ENCODE measurements at regions of chr6 and their contacts with region 1.

Region 1: DNA sequence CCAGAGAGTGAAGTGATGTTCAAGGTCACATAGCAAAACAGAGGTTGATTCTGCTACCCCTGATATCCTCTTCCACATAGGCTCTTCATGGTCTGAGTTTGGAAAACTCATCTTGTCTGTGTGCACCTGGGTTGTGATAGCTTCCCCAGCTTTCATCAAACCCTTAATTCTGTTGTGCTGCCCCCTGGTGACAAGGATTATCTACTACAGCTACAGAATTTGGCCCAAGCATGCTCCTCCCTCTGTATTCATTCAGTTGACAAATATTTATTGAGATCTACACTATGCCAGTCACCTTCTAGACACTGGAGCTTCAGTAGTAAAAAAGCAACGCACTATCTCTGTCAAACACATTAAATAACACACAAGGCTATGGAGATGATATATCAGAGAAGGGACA is 50.4 kb downstream of the SMPDL3A start:
- DNase-seq: peak in 1 of 2 experiments; percentile 87
- H3K4me3 ChIP-seq: no peak overlapping the region
- H3K27ac ChIP-seq: no peak overlapping the region
- H3K4me1 ChIP-seq: peaks cover 0 to 2% (median 0%) of the 10 kb centered on the region in 4 experiments; a peak in 1 of 7 replicates
- H3K27me3 ChIP-seq: no peaks in the 10 kb centered on the region
- CTCF ChIP-seq: peak in 2 of 3 experiments; percentile 71 to 72; a peak in 3 of 4 replicates
- EP300 ChIP-seq: no peak
- POLR2A ChIP-seq: no peak
- RAD21 ChIP-seq: peak; percentile 69 to 78

Region 2: GRCh38 chr6:122491919-122492555 is 347.4 kb before region 1 on chr6:
- CTCF ChIA-PET with region 1: interaction called, 13 read pairs
- POLR2A ChIA-PET with region 1: no interaction called
- DNase-seq: peak in 1 of 2 experiments; percentile 74
- H3K4me3 ChIP-seq: no peak overlapping the region
- H3K27ac ChIP-seq: no peak overlapping the region
- H3K4me1 ChIP-seq: no peaks in the 10 kb centered on the region
- H3K27me3 ChIP-seq: no peaks in the 10 kb centered on the region
- CTCF ChIP-seq: peak; percentile 64 to 82 (median 75)
- EP300 ChIP-seq: no peak
- POLR2A ChIP-seq: no peak
- RAD21 ChIP-seq: peak; percentile 85 to 87

Region 3: DNA sequence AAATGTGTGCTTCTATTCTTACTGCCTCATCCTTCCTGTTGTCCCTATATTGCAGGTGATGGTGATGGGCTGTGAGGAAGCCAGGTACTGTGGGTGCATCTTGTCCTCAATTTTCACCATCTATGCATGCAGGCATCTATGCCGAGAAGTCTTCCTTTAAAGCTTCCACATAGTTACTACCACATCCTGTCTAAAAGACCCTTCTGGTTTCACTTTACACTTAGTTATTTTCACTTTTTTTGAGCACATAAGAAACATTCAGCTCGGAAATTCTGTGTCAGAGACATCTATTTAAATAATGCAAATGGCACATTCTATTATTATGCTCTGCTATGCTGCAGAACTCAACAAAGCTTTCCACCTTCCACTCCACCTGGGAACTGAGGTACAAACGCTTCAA is 88.2 kb before region 1 on chr6:
- CTCF ChIA-PET with region 1: interaction called, 82 read pairs
- POLR2A ChIA-PET with region 1: no interaction called
- DNase-seq: no peak
- H3K4me3 ChIP-seq: no peak overlapping the region
- H3K27ac ChIP-seq: no peak overlapping the region
- H3K4me1 ChIP-seq: peaks cover 0 to 4% (median 1%) of the 10 kb centered on the region in 4 experiments; a peak in 1 of 7 replicates
- H3K27me3 ChIP-seq: 0 out of 7 replicates have a peak, but pooled peaks cover 0 to 1% (median 0%) of the 10 kb centered on the region in 4 experiments
- CTCF ChIP-seq: no peak
- EP300 ChIP-seq: no peak
- POLR2A ChIP-seq: no peak
- RAD21 ChIP-seq: no peak

Region 4: DNA sequence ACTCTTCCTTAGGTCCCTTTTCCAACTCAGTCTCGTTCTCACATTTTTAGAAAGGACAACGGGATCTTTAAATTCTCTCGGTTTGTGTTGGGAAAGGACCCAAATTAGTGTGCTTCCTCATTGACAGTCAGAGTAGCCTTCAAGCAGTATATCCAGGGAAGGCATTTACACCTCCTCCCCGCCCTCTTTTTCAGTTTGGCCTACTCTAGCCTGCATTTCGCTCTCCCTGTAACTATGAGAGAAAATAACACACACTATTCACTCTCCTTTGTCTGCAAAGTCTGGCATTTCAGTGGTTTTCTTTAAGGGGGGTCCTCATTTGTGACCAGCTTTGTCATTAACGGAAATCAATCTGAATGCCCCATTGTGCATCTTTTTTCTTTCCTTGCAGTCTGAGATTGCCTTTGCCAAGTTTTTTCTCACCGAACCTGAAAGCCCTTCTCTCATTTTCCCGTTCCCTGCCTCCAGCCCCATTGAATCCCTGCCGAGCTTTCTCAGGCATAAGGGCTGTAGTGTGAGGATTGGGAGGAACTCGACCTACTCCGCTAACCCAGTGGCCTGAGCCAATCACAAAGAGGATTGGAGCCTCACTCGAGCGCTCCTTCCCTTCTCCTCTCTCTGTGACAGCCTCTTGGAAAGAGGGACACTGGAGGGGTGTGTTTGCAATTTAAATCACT is 60.4 kb before region 1 on chr6:
- CTCF ChIA-PET with region 1: interaction called, 12 read pairs
- POLR2A ChIA-PET with region 1: no interaction called
- DNase-seq: peak in 1 of 2 experiments; percentile 63
- H3K4me3 ChIP-seq: peak overlapping the region in 1 of 4 experiments; percentile 47; a peak in 3 of 8 replicates
- H3K27ac ChIP-seq: no peak overlapping the region
- H3K4me1 ChIP-seq: peaks cover 2 to 9% (median 8%) of the 10 kb centered on the region in 4 experiments; a peak in 6 of 7 replicates
- H3K27me3 ChIP-seq: no peaks in the 10 kb centered on the region
- CTCF ChIP-seq: no peak
- EP300 ChIP-seq: no peak
- POLR2A ChIP-seq: no peak
- RAD21 ChIP-seq: no peak

Region 5: DNA sequence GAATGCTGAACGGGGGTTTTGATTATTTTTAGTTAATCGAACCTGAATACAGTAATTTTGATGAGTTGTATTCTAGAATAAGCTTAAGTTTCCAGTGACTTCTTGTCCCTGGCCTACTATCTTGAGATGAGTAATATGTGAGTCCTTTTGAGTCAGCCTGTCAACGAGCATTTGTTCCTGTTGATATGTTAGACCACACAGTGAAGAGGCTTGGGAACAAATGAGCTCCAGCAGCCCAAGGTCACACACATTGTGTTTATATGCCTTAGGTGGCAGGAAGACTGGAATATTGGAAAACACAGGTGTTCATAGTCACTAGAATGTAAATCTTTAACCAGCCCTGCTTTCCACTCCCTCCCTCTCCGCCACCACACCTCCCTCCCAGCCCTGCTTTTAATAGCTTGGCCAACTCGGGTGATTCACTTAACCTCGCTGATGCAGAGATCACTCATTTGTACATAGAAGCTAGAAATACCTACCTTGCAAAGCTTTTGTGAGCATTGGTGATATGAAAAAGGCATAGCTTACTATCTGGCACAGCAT is 41.3 kb before region 1 on chr6:
- CTCF ChIA-PET with region 1: interaction called, 62 read pairs
- POLR2A ChIA-PET with region 1: interaction called, 4 read pairs
- DNase-seq: no peak
- H3K4me3 ChIP-seq: no peak overlapping the region
- H3K27ac ChIP-seq: no peak overlapping the region
- H3K4me1 ChIP-seq: no peaks in the 10 kb centered on the region
- H3K27me3 ChIP-seq: no peaks in the 10 kb centered on the region
- CTCF ChIP-seq: no peak
- EP300 ChIP-seq: no peak
- POLR2A ChIP-seq: no peak
- RAD21 ChIP-seq: no peak

Region 6: GRCh38 chr6:122825158-122825557 is 14.3 kb before region 1 on chr6:
- CTCF ChIA-PET with region 1: interaction called, 29 read pairs
- POLR2A ChIA-PET with region 1: no interaction called
- DNase-seq: no peak
- H3K4me3 ChIP-seq: no peak overlapping the region
- H3K27ac ChIP-seq: no peak overlapping the region
- H3K4me1 ChIP-seq: peaks cover 0 to 11% (median 8%) of the 10 kb centered on the region in 4 experiments; a peak in 4 of 7 replicates
- H3K27me3 ChIP-seq: no peaks in the 10 kb centered on the region
- CTCF ChIP-seq: no peak
- EP300 ChIP-seq: no peak
- POLR2A ChIP-seq: no peak
- RAD21 ChIP-seq: no peak

Region 7: DNA sequence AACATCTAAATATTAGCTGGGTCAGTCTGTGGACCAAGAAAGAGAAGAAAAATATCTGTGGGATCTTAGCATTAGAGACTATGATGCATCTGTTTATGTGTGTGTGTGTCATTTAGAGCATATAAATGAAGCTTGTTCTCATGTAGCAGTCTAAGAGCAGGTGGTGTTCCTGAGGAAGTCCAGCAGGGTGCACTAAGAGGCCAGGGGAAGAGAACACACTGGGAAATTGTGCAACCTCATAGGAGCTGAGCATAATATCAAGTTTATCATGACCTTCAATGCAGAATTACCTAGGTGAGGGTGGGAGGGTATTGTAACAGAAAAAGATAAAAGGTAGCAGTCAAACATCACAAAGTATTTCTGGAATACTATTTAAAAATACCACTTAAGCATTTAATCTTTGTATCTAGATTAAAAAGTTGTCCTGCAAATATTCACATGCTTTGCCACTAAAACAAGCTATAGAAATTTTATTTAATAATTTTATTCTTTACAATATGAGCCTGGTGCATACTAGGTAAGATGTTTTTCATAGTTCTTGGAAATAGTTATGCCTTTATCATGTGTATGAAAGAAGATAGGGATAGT is 30.1 kb after region 1 on chr6:
- CTCF ChIA-PET with region 1: interaction called, 14 read pairs
- POLR2A ChIA-PET with region 1: no interaction called
- DNase-seq: no peak
- H3K4me3 ChIP-seq: no peak overlapping the region
- H3K27ac ChIP-seq: no peak overlapping the region
- H3K4me1 ChIP-seq: no peaks in the 10 kb centered on the region
- H3K27me3 ChIP-seq: no peaks in the 10 kb centered on the region
- CTCF ChIP-seq: peak; percentile 43 to 77 (median 75)
- EP300 ChIP-seq: no peak
- POLR2A ChIP-seq: no peak
- RAD21 ChIP-seq: peak; percentile 97